ENCODE measurements at regions of chr14 and their contacts with region 1.

Region 1: DNA sequence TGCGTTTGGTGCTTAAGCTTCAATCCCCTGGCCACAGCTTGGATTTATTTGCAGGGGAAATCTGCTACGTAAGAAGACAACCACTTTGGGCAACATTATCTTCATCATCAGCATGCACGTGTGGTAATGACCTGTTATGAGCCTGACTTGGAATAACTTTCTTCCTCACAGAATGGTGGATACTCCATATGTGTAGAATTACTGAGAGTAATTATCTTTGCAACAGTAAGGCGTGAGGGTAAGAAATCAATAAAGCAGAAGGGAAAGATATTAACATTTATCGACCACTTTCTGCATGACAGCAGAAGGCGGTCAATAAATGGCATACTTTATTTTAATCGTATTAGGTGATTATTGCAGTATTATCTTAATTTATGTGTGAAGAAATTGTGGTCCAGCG is 152.7 kb downstream of the RGS6 start:
- DNase-seq: no peak
- H3K4me3 ChIP-seq: no peak overlapping the region
- H3K27ac ChIP-seq: no peak overlapping the region
- H3K4me1 ChIP-seq: no peaks in the 10 kb centered on the region
- H3K27me3 ChIP-seq: no peaks in the 10 kb centered on the region
- CTCF ChIP-seq: no peak
- POLR2A ChIP-seq: no peak

Region 2: DNA sequence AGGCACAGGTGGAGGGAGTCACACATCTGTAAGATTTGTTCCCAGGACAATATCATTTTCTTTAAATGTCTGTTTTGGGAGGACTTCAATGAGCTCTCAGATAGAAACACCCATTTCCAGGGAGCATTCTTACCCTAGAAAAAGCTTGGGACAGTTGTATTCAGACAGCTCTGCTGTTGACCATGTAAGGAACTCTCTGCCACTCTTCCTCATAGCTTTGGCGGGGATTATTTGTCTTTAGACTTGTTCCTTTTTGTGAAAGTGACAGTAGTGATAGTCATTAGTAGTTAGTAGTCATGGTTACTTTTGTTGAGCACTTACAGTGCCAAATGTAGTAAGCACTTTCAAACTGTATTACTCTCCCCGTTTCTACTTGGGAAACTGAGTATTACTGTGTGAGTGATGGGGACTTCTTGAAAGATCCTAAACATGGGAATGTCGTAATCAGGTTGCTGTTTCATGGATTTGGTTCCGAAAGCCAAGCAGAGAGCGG is 14.6 kb after region 1 on chr14:
- intact Hi-C with region 1: loop called (anchors 2 kb)
- DNase-seq: no peak
- H3K4me3 ChIP-seq: no peak overlapping the region
- H3K27ac ChIP-seq: peak overlapping the region in 1 of 2 donors; percentile 69
- H3K4me1 ChIP-seq: no peaks in the 10 kb centered on the region
- H3K27me3 ChIP-seq: no peaks in the 10 kb centered on the region
- CTCF ChIP-seq: no peak
- POLR2A ChIP-seq: no peak

Region 3: GRCh38 chr14:72154723-72155633 is 70.0 kb after region 1 on chr14:
- intact Hi-C with region 1: loop called (anchors 2 kb)
- DNase-seq: no peak
- H3K4me3 ChIP-seq: no peak overlapping the region
- H3K27ac ChIP-seq: peak overlapping the region in 1 of 2 donors; percentile 38
- H3K4me1 ChIP-seq: no peaks in the 10 kb centered on the region
- H3K27me3 ChIP-seq: no peaks in the 10 kb centered on the region
- CTCF ChIP-seq: no peak
- POLR2A ChIP-seq: no peak

Measured in breast epithelium (tissue), 4 donors.